GM12878 (cell line): ENCODE measurements at regions of chr2 and their contacts with region 1.

Region 1: DNA sequence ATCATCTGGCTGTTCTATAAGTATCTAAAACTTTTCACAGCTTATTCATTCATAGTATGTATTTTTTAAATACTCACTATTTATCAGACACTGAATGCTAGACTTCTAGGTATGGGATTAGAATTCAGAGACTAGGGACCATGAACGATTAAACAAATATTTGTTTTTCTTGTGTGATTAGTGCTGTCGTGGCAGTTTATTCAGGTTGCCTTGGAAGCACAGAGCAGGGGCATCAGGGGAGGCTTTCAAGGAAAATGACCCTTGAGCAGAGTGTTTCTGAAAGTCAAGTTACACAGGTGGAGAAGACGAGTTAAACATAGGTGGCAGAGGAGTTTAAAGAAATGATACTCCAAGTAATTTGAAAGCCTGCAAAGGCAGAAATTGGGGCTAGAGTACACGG is 5.7 kb downstream of the SPOPL start:
- DNase-seq: no peak
- ATAC-seq: no peak; the same call in 2 of the 3 replicates
- H3K4me3 ChIP-seq: 0 out of 2 replicates have a peak overlapping the region, but pooled peaks have one; percentile 29
- H3K27ac ChIP-seq: no peak overlapping the region
- H3K4me1 ChIP-seq: peaks cover 15% of the 10 kb centered on the region
- H3K27me3 ChIP-seq: no peaks in the 10 kb centered on the region
- CTCF ChIP-seq: no peak
- EP300 ChIP-seq: no peak
- POLR2A ChIP-seq: no peak
- RAD21 ChIP-seq: no peak

Region 2: DNA sequence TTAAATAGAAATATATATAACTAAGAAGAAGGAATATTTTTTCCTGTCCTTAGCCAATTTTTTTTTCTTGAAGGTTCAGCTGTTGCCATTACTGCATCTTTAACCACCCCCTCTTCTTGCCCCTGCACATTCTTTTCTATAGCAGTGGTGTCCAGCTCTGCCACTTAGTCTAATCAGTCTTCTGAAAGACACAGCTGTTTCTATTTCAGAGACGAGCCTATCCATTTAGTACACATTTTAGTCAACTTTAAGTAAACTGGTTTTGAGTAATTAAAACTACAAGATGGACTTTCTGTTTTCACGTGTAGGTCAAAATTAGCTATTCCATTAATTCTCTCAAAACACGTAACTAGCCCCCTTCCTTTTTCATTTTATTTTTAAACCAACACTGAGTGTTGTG is 15.3 kb after region 1 on chr2:
- CTCF ChIA-PET with region 1: interaction called, 15 read pairs
- POLR2A ChIA-PET with region 1: interaction called, 29 read pairs
- RAD21 ChIA-PET with region 1: interaction called, 31 read pairs
- SMC1A ChIA-PET with region 1: interaction called, 142 read pairs
- in situ Hi-C with region 1: no loop called
- intact Hi-C with region 1: no loop called
- DNase-seq: no peak
- ATAC-seq: peak; percentile 81
- H3K4me3 ChIP-seq: peak overlapping the region; percentile 36; the same call in 1 of the 2 replicates
- H3K27ac ChIP-seq: peak overlapping the region; percentile 84
- H3K4me1 ChIP-seq: peaks cover 26% of the 10 kb centered on the region
- H3K27me3 ChIP-seq: no peaks in the 10 kb centered on the region
- CTCF ChIP-seq: no peak
- EP300 ChIP-seq: no peak
- POLR2A ChIP-seq: no peak
- RAD21 ChIP-seq: no peak

Region 3: GRCh38 chr2:138931284-138932256 is 424.3 kb after region 1 on chr2:
- CTCF ChIA-PET with region 1: no interaction called
- POLR2A ChIA-PET with region 1: no interaction called
- RAD21 ChIA-PET with region 1: no interaction called
- SMC1A ChIA-PET with region 1: no interaction called
- in situ Hi-C with region 1: no loop called
- intact Hi-C with region 1: no loop called
- DNase-seq: no peak
- ATAC-seq: no peak
- H3K4me3 ChIP-seq: no peak overlapping the region
- H3K27ac ChIP-seq: no peak overlapping the region
- H3K4me1 ChIP-seq: no peaks in the 10 kb centered on the region
- H3K27me3 ChIP-seq: no peaks in the 10 kb centered on the region
- CTCF ChIP-seq: no peak
- EP300 ChIP-seq: no peak
- POLR2A ChIP-seq: no peak
- RAD21 ChIP-seq: no peak